Kidney (tissue), 22 donors: ENCODE measurements at regions of chrX and their contacts with region 1.

Region 1: GRCh38 chrX:68828740-68829552 is at the start of gene EFNB1:
- DNase-seq: peak; percentile 95 to 98 (median 97)
- H3K4me3 ChIP-seq: peak within 1 kb of the TSS; percentile 56 to 58 (median 56)
- H3K27ac ChIP-seq: peak within 1 kb of the TSS; percentile 65 to 81
- H3K4me1 ChIP-seq: peaks cover 0 to 10% (median 0%) of the 10 kb centered on the region in 3 donors
- H3K27me3 ChIP-seq: no peaks in the 10 kb centered on the region
- CTCF ChIP-seq: no peak
- total RNA-seq, gene EFNB1: 53.0 TPM

Region 2: DNA sequence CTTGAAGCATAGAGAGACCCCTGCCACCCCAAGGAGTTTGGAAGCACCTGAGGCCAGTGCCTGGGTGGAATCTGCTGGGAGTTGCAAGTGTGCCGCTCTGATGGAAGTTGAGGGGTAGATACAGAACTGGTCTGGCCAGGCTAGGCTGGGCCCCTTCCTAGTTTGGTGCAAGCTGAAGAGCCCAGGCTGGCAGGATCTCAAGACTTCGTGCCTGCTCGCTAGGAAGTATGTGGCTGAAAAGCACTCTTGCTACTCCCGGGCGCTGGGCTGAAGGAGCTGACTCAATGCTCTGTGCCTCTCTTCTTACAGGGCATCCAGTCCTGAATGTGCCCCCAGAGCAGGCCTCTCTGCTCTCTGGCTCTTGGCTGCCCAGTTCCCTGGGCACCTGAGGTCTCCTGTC is 388.0 kb after region 1 on chrX:
- intact Hi-C with region 1: loop called (anchors 10 kb)
- DNase-seq: no peak
- H3K4me3 ChIP-seq: no peak overlapping the region
- H3K27ac ChIP-seq: no peak overlapping the region
- H3K4me1 ChIP-seq: no peaks in the 10 kb centered on the region
- H3K27me3 ChIP-seq: peaks cover 4% of the 10 kb centered on the region
- CTCF ChIP-seq: no peak

Region 3: GRCh38 chrX:69285881-69286564 is 457.1 kb after region 1 on chrX:
- intact Hi-C with region 1: loop called (anchors 10 kb)
- DNase-seq: peak; percentile 78 to 87 (median 81)
- H3K4me3 ChIP-seq: peak overlapping the region in 2 of 3 donors; percentile 29 to 39
- H3K27ac ChIP-seq: no peak overlapping the region
- H3K4me1 ChIP-seq: peaks cover 0 to 8% (median 2%) of the 10 kb centered on the region in 3 donors
- H3K27me3 ChIP-seq: no peaks in the 10 kb centered on the region
- CTCF ChIP-seq: peak; percentile 76